Left lung (tissue), 14 donors: ENCODE measurements at regions of chr17 and their contacts with region 1.

Region 1: DNA sequence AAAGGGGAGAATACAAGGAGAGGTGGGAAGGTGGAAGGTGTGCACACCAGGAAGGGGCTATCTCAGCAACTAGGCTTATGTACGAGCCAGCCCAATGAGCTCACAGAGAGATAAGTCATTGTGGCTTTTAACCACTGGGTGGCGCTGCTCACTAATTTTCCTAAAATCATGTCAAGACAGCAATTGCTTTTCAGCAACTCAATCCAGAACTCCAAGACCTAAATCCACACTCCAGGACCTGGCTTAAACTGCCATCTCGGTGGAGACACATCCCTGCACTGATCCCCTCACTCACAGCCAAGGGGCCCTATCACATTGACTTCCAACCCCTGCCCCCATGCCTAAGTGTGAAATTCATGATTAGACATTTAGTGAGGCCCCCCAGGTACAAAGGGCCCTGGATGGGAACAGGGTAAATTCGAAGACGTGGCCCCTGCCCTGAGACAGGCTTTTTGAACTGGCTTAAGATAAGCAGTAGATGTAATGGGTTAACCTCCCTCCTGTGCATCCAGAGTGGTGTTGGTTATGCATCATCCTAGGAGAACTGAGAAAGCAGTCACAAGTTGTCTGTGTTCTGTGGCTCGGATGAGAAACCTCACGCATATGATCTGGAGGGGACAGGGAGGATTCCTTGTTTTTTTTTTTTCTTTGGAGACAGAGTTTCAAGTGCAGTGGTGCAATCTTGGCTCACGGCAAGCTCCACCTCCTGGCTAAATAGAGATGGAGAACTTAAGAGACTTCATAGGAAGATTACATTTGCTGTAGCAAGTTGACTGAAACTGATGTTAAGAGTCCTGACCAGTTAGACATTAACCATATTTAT is 11.5 kb downstream of the CCL16 start:
- DNase-seq: peak in 3 of 4 donors; percentile 66 to 86 (median 71)
- ATAC-seq: peak; percentile 94
- H3K4me3 ChIP-seq: no peak overlapping the region
- H3K27ac ChIP-seq: no peak overlapping the region
- H3K4me1 ChIP-seq: peaks cover 0 to 14% of the 10 kb centered on the region in 2 donors
- H3K27me3 ChIP-seq: no peaks in the 10 kb centered on the region
- CTCF ChIP-seq: peak; percentile 81 to 89

Region 2: DNA sequence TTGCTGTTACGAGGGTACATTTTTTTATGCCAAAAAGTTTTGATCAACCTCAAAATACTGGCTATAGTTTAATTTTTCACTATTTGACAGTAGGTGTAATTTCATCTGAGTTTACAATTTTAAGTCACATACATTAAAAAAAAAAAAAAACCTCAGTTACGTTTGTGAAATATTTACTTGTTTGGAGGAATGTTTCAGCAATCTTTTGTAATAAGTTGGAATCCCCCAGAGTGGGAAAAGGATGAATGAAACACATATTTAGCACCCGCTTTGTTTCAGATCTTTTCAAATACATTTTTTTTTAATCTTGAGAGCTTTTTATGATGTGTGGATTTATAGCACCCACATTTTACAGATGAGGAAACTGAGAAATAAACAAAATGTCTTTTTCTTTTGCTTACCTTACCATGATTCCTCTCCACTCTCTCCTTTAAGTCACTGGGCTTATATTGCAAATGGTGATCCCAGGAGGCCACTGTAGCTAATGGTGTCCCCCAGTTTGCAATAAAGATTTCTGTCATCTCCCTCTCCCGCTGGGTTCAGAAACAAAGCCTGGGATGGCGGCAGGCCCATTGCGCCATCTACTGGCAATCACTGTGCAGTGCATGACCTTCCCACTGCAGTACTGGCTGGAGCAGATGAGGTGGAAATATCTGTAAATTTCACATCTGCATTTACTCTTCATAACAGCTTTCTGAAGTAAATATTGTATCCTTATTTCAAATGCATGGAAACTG is 179.0 kb after region 1 on chr17:
- intact Hi-C with region 1: loop called (anchors 5 to 10 kb)
- DNase-seq: peak; percentile 37 to 91 (median 70)
- ATAC-seq: peak; percentile 98
- H3K4me3 ChIP-seq: no peak overlapping the region
- H3K27ac ChIP-seq: no peak overlapping the region
- H3K4me1 ChIP-seq: peaks cover 0 to 11% of the 10 kb centered on the region in 2 donors
- H3K27me3 ChIP-seq: peaks cover 0 to 15% of the 10 kb centered on the region in 2 donors
- CTCF ChIP-seq: peak; percentile 99